Activated CD4-positive, alpha-beta memory T cell treated with anti-CD3 and anti-CD28 coated beads for 36 hours (primary cell): ENCODE measurements at regions of chr14 and their contacts with region 1.

Region 1: GRCh38 chr14:61456720-61457119 is 135.3 kb downstream of the PRKCH start:
- DNase-seq: peak; percentile 87
- H3K4me3 Mint-ChIP-seq: no peak overlapping the region
- H3K27ac Mint-ChIP-seq: peak overlapping the region; percentile 60
- H3K4me1 Mint-ChIP-seq: peaks cover 81% of the 10 kb centered on the region
- H3K27me3 Mint-ChIP-seq: no peaks in the 10 kb centered on the region

Region 2: GRCh38 chr14:61296719-61297502 is 159.8 kb before region 1 on chr14:
- CTCF ChIA-PET with region 1: interaction called, 9 read pairs
- POLR2A ChIA-PET with region 1: no interaction called
- intact Hi-C with region 1: loop called (anchors 1 kb)
- DNase-seq: no peak
- H3K4me3 Mint-ChIP-seq: no peak overlapping the region
- H3K27ac Mint-ChIP-seq: no peak overlapping the region
- H3K4me1 Mint-ChIP-seq: peaks cover 44% of the 10 kb centered on the region
- H3K27me3 Mint-ChIP-seq: no peaks in the 10 kb centered on the region

Region 3: DNA sequence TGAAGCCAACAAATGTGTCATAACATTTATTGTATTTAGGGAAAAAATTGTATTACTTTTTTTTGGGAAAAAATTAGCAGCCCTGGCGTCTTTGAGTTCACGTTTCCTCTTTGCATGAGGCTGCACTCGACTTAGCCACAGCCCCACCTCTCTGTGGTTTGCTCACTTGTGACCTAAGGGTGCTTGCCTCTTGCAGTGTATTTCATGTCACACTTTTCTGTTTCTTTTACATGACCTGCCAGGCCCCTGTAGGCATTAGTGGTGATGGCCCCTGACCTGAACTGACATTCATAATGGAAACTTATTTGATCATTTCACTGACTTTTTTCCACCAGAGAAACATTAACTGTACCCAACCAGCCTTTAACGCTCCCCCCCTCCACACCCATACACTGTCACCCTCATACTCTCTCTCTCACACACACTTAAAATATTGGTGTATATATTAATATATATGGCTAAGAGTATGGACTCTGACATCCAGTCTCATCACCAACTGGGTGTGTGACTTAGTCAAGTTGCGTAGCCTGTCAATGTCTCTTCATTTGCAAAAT is 12.4 kb before region 1 on chr14:
- CTCF ChIA-PET with region 1: interaction called, 4 read pairs
- POLR2A ChIA-PET with region 1: no interaction called
- intact Hi-C with region 1: loop called (anchors 1 kb)
- DNase-seq: peak; percentile 88
- H3K4me3 Mint-ChIP-seq: peak overlapping the region; percentile 56
- H3K27ac Mint-ChIP-seq: peak overlapping the region; percentile 94
- H3K4me1 Mint-ChIP-seq: peaks cover 91% of the 10 kb centered on the region
- H3K27me3 Mint-ChIP-seq: no peaks in the 10 kb centered on the region